ENCODE measurements at regions of chr7 and their contacts with region 1.

Region 1: GRCh38 chr7:55185941-55186609 is 167.3 kb downstream of the EGFR start:
- DNase-seq: peak; percentile 42 to 76
- H3K4me3 ChIP-seq: no peak overlapping the region
- H3K4me3 Mint-ChIP-seq: peak overlapping the region; percentile 91
- H3K27ac Mint-ChIP-seq: peak overlapping the region; percentile 85
- H3K4me1 ChIP-seq: peaks cover 77% of the 10 kb centered on the region
- H3K4me1 Mint-ChIP-seq: peaks cover 65% of the 10 kb centered on the region
- H3K27me3 ChIP-seq: no peaks in the 10 kb centered on the region
- H3K27me3 Mint-ChIP-seq: no peaks in the 10 kb centered on the region
- CTCF ChIP-seq: no peak

Region 2: GRCh38 chr7:55030314-55030713 is 155.8 kb before region 1 on chr7:
- CTCF ChIA-PET with region 1: no interaction called
- POLR2A ChIA-PET with region 1: no interaction called
- intact Hi-C with region 1: no loop called
- DNase-seq: no peak
- H3K4me3 ChIP-seq: no peak overlapping the region
- H3K4me3 Mint-ChIP-seq: no peak overlapping the region
- H3K27ac Mint-ChIP-seq: no peak overlapping the region
- H3K4me1 ChIP-seq: peaks cover 16% of the 10 kb centered on the region; the same call in 1 of the 2 replicates
- H3K4me1 Mint-ChIP-seq: peaks cover 10% of the 10 kb centered on the region
- H3K27me3 ChIP-seq: no peaks in the 10 kb centered on the region
- H3K27me3 Mint-ChIP-seq: no peaks in the 10 kb centered on the region
- CTCF ChIP-seq: no peak

Region 3: GRCh38 chr7:55207436-55208125 is 21.5 kb after region 1 on chr7:
- CTCF ChIA-PET with region 1: no interaction called
- POLR2A ChIA-PET with region 1: interaction called, 10 read pairs
- intact Hi-C with region 1: loop called (anchors 1 kb)
- DNase-seq: no peak
- H3K4me3 ChIP-seq: no peak overlapping the region
- H3K4me3 Mint-ChIP-seq: no peak overlapping the region
- H3K27ac Mint-ChIP-seq: no peak overlapping the region
- H3K4me1 ChIP-seq: peaks cover 11% of the 10 kb centered on the region; the same call in 1 of the 2 replicates
- H3K4me1 Mint-ChIP-seq: peaks cover 10% of the 10 kb centered on the region
- H3K27me3 ChIP-seq: no peaks in the 10 kb centered on the region
- H3K27me3 Mint-ChIP-seq: no peaks in the 10 kb centered on the region
- CTCF ChIP-seq: no peak

Region 4: GRCh38 chr7:55224111-55224510 is 38.0 kb after region 1 on chr7:
- CTCF ChIA-PET with region 1: no interaction called
- POLR2A ChIA-PET with region 1: no interaction called
- intact Hi-C with region 1: no loop called
- DNase-seq: no peak
- H3K4me3 ChIP-seq: no peak overlapping the region
- H3K4me3 Mint-ChIP-seq: no peak overlapping the region
- H3K27ac Mint-ChIP-seq: no peak overlapping the region
- H3K4me1 ChIP-seq: no peaks in the 10 kb centered on the region
- H3K4me1 Mint-ChIP-seq: no peaks in the 10 kb centered on the region
- H3K27me3 ChIP-seq: no peaks in the 10 kb centered on the region
- H3K27me3 Mint-ChIP-seq: no peaks in the 10 kb centered on the region
- CTCF ChIP-seq: no peak

Region 5: GRCh38 chr7:55827577-55827976 is 641.5 kb after region 1 on chr7:
- CTCF ChIA-PET with region 1: no interaction called
- POLR2A ChIA-PET with region 1: no interaction called
- intact Hi-C with region 1: no loop called
- DNase-seq: no peak
- H3K4me3 ChIP-seq: no peak overlapping the region
- H3K4me3 Mint-ChIP-seq: no peak overlapping the region
- H3K27ac Mint-ChIP-seq: no peak overlapping the region
- H3K4me1 ChIP-seq: no peaks in the 10 kb centered on the region
- H3K4me1 Mint-ChIP-seq: no peaks in the 10 kb centered on the region
- H3K27me3 ChIP-seq: no peaks in the 10 kb centered on the region
- H3K27me3 Mint-ChIP-seq: no peaks in the 10 kb centered on the region
- CTCF ChIP-seq: no peak

Measured in Caco-2 (cell line).